Activated T-helper 1 cell treated with anti-CD3 and anti-CD28 coated beads, Interleukin-12 subunit alpha, Interleukin-12 subunit beta, Interleukin-2, Interleukin-4 antibody, amounts not matched to agents 30 ng/mL and 10 ng/mL and 1 ng/mL, durations not matched to agents 14 hours and 24 hours and 36 hours (primary cell): ENCODE measurements at regions of chr2 and their contacts with region 1.

Region 1: GRCh38 chr2:64523666-64524603 is at the start of gene AFTPH:
- DNase-seq: peak; percentile 100
- H3K4me3 Mint-ChIP-seq: peak within 1 kb of the TSS; percentile 99
- H3K27ac Mint-ChIP-seq: peak within 1 kb of the TSS; percentile 100
- H3K4me1 Mint-ChIP-seq: peaks cover 39% of the 10 kb centered on the region
- H3K27me3 Mint-ChIP-seq: peaks cover 2% of the 10 kb centered on the region
- total RNA-seq, gene AFTPH: 42.4 and 43.4 TPM in 2 replicates

Region 2: GRCh38 chr2:64036034-64036705 is 487.8 kb before region 1 on chr2:
- intact Hi-C with region 1: loop called (anchors 1 kb)
- DNase-seq: peak; percentile 36
- H3K4me3 Mint-ChIP-seq: peak overlapping the region; percentile 51
- H3K27ac Mint-ChIP-seq: peak overlapping the region; percentile 89
- H3K4me1 Mint-ChIP-seq: peaks cover 55% of the 10 kb centered on the region
- H3K27me3 Mint-ChIP-seq: no peaks in the 10 kb centered on the region

Region 3: DNA sequence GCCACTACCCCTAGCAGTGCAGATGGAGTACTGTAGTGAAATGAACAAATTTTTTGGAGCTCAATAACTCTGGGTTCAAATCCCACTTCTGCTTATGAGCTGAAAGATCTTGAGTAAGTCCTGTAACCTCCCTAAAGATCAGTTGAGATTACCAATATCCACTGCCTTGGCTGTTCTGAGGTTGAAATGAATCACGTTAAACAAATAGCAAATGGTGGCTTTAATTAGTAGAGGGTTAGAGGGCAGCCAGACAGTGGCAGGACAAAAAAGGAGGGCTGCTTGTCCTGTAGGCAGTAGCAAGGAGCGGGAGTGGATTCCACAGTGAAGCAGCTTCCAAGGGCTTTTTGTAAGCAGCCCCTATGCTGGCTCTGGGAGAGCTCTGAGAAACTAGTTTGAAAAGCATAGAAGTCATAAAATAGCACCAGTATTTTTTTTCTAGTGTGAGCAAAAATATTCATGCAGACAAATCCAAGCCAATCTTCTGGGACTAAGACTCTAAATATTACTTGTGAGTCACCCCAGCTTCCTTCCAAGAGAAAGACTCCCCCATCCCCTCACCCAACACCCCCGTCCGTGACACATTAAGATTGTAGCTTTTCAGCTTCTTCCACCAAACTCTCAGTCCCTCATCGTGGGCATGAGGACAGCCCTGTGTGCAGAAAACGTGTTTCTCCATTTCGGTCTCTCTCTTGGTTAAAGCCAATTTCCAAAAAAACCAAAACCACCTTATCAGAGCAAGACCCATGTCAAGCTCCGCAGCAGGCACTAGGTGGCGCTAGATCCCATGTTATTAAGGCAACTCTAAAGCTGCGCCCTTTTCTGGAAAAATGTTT is 193.4 kb before region 1 on chr2:
- intact Hi-C with region 1: loop called (anchors 1 kb)
- DNase-seq: peak; percentile 60
- H3K4me3 Mint-ChIP-seq: peak overlapping the region; percentile 73
- H3K27ac Mint-ChIP-seq: peak overlapping the region; percentile 66
- H3K4me1 Mint-ChIP-seq: peaks cover 60% of the 10 kb centered on the region
- H3K27me3 Mint-ChIP-seq: peaks cover 10% of the 10 kb centered on the region

Region 4: DNA sequence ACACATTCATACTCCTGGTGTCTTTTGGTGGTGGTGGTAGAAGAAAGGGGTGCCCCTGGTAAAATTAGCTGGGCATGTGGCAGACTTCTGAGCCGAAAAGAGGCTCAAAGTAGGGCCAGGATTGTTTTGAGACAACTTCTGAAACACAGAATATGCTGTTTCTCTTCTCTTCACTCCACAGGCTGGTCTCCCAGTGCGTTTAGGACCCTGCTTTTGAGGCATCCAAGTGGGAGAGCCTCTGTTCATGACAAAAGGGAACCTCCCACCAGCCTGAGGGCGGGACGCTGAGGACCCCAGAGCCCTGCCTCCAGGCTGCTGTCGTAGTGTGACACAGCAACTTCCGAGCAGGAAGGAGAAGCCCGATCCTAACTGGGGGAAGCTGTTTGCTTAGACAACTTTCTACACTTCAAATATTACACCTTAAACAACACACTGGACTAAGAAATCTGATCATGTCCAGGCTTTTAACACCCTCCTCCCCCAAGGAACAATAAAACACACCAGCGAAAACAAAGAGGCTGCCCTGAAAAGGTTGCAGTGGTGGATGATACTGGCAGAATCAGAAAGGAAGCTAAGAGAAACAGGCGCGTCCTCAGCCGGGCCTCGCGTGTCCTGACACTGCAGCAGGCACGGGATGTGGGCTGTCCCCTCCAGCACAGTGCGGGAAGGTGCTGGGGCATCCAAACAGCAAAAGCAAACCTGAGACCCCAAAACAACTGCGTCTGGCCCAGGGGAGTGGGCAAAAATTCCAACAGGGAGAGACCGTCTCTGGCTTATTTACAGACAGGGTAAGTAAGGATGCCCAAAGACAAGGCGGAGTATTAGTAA is 120.5 kb after region 1 on chr2:
- intact Hi-C with region 1: loop called (anchors 1 kb)
- DNase-seq: peak; percentile 51
- H3K4me3 Mint-ChIP-seq: peak overlapping the region; percentile 86
- H3K27ac Mint-ChIP-seq: peak overlapping the region; percentile 90
- H3K4me1 Mint-ChIP-seq: peaks cover 82% of the 10 kb centered on the region
- H3K27me3 Mint-ChIP-seq: peaks cover 3% of the 10 kb centered on the region

Region 5: GRCh38 chr2:64865073-64865830 is 341.3 kb after region 1 on chr2:
- intact Hi-C with region 1: loop called (anchors 1 kb)
- DNase-seq: peak; percentile 61
- H3K4me3 Mint-ChIP-seq: peak overlapping the region; percentile 78
- H3K27ac Mint-ChIP-seq: peak overlapping the region; percentile 60
- H3K4me1 Mint-ChIP-seq: peaks cover 6% of the 10 kb centered on the region
- H3K27me3 Mint-ChIP-seq: peaks cover 13% of the 10 kb centered on the region

Region 6: DNA sequence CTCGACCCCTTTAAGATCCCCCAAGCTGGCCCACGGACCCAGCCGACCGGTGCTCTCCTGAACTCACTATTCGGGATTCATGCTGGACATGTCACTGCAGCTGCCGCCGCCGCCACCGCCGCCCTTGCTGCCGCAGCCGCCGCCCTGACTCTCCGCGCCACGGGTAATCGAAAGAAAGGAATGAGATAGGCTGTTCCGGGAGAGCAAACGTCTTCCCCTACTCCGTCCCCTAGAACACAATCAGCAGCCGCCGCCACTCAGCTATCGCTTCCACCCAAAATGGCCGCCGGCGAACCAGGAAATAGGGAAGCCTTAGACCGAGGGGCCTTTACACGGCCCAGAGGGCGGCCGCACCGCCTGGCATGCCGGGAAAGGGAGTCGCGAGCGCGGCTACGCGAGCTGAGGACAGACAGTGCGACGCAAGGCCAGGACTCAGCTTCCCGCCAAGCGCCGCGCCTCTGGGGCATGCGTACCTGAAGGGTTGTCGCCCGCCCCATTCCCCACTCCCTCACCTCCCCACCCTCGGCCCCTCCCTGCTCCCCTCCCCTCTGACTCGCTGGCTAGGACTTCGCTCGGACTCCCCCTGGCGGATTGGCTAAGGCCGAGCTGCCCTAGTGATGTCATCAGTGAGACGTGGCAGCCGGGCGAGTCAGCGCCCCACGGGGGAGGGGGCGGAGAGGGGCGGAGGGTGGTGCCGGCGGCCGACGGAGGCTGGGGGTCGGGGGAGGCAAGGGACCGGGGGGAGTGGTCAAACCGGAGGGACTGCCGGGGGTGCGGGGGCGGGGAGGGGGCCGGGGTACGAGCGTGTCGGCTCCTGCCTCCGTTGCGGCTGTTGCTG is 606.1 kb after region 1 on chr2 and contains the start of gene RAB1A:
- intact Hi-C with region 1: loop called (anchors 1 kb)
- DNase-seq: peak; percentile 98
- H3K4me3 Mint-ChIP-seq: peak within 1 kb of the TSS; percentile 98
- H3K27ac Mint-ChIP-seq: peak within 1 kb of the TSS; percentile 99
- H3K4me1 Mint-ChIP-seq: peaks cover 30% of the 10 kb centered on the region
- H3K27me3 Mint-ChIP-seq: peaks cover 16% of the 10 kb centered on the region
- total RNA-seq, gene RAB1A: 73.4 and 81.6 TPM in 2 replicates